CD4-positive, alpha-beta memory T cell (primary cell): ENCODE measurements at regions of chr2 and their contacts with region 1.

Region 1: GRCh38 chr2:197804049-197804757 is at the start of gene PLCL1:
- DNase-seq: peak; percentile 89 to 92 (median 90)
- H3K4me3 ChIP-seq: peak within 1 kb of the TSS; percentile 60 to 82
- H3K4me3 Mint-ChIP-seq: peak within 1 kb of the TSS; percentile 92 to 97 (median 96)
- H3K27ac ChIP-seq: peak within 1 kb of the TSS; percentile 61
- H3K27ac Mint-ChIP-seq: peak within 1 kb of the TSS; percentile 77 to 94 (median 89)
- H3K4me1 ChIP-seq: peaks cover 50% of the 10 kb centered on the region
- H3K4me1 Mint-ChIP-seq: peaks cover 35 to 54% (median 45%) of the 10 kb centered on the region in 4 donors
- H3K27me3 ChIP-seq: no peaks in the 10 kb centered on the region
- H3K27me3 Mint-ChIP-seq: peaks cover 0 to 1% of the 10 kb centered on the region in 2 donors
- total RNA-seq, gene PLCL1: 16.9 to 17.6 TPM

Region 2: GRCh38 chr2:197851451-197851850 is 47.2 kb after region 1 on chr2:
- CTCF ChIA-PET with region 1: interaction called, 9 read pairs
- POLR2A ChIA-PET with region 1: interaction called, 3 read pairs
- intact Hi-C with region 1: loop called (anchors 2 kb)
- DNase-seq: no peak
- H3K4me3 ChIP-seq: no peak overlapping the region
- H3K4me3 Mint-ChIP-seq: peak overlapping the region in 1 of 8 donors; percentile 1
- H3K27ac ChIP-seq: no peak overlapping the region
- H3K27ac Mint-ChIP-seq: no peak overlapping the region
- H3K4me1 ChIP-seq: peaks cover 44% of the 10 kb centered on the region
- H3K4me1 Mint-ChIP-seq: peaks cover 45 to 70% (median 56%) of the 10 kb centered on the region in 4 donors
- H3K27me3 ChIP-seq: no peaks in the 10 kb centered on the region
- H3K27me3 Mint-ChIP-seq: no peaks in the 10 kb centered on the region

Region 3: GRCh38 chr2:197889041-197889440 is 84.8 kb after region 1 on chr2:
- CTCF ChIA-PET with region 1: interaction called, 3 read pairs
- POLR2A ChIA-PET with region 1: interaction called, 3 read pairs
- intact Hi-C with region 1: loop called (anchors 2 kb)
- DNase-seq: peak; percentile 22 to 61 (median 28)
- H3K4me3 ChIP-seq: no peak overlapping the region
- H3K4me3 Mint-ChIP-seq: peak overlapping the region in 7 of 8 donors; percentile 10 to 75 (median 69)
- H3K27ac ChIP-seq: no peak overlapping the region
- H3K27ac Mint-ChIP-seq: peak overlapping the region; percentile 48 to 93 (median 81)
- H3K4me1 ChIP-seq: peaks cover 59% of the 10 kb centered on the region
- H3K4me1 Mint-ChIP-seq: peaks cover 29 to 57% (median 40%) of the 10 kb centered on the region in 4 donors
- H3K27me3 ChIP-seq: no peaks in the 10 kb centered on the region
- H3K27me3 Mint-ChIP-seq: no peaks in the 10 kb centered on the region

Region 4: DNA sequence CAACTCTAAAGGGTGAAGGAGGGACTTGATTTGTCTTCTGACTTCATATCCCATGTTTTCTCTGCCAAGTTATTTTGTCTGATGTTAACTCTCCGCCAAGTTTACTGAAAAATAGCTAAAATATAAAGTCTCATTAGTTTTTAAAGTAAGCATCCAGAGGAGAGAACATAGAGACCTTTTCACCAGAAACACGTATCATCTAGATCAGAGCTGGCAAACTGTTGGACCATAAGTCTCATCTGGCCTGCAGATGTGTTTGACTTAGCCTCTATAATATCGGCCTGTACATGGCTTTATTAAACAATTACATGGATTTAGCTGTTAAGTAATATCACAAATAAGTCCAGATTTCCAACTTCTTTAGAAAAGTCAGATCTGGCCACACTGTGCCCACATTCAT is 182.8 kb after region 1 on chr2:
- CTCF ChIA-PET with region 1: interaction called, 3 read pairs
- POLR2A ChIA-PET with region 1: no interaction called
- intact Hi-C with region 1: loop called (anchors 1 kb)
- DNase-seq: no peak
- H3K4me3 ChIP-seq: no peak overlapping the region
- H3K4me3 Mint-ChIP-seq: no peak overlapping the region
- H3K27ac ChIP-seq: no peak overlapping the region
- H3K27ac Mint-ChIP-seq: peak overlapping the region in 1 of 7 donors; percentile 8
- H3K4me1 ChIP-seq: no peaks in the 10 kb centered on the region
- H3K4me1 Mint-ChIP-seq: peaks cover 0 to 8% (median under 1%) of the 10 kb centered on the region in 4 donors
- H3K27me3 ChIP-seq: no peaks in the 10 kb centered on the region
- H3K27me3 Mint-ChIP-seq: no peaks in the 10 kb centered on the region

Region 5: GRCh38 chr2:198127627-198128026 is 323.4 kb after region 1 on chr2:
- CTCF ChIA-PET with region 1: interaction called, 29 read pairs
- POLR2A ChIA-PET with region 1: interaction called, 3 read pairs
- intact Hi-C with region 1: loop called (anchors 1 kb)
- DNase-seq: peak in 4 of 5 donors; percentile 37 to 49 (median 42)
- H3K4me3 ChIP-seq: no peak overlapping the region
- H3K4me3 Mint-ChIP-seq: no peak overlapping the region
- H3K27ac ChIP-seq: no peak overlapping the region
- H3K27ac Mint-ChIP-seq: no peak overlapping the region
- H3K4me1 ChIP-seq: no peaks in the 10 kb centered on the region
- H3K4me1 Mint-ChIP-seq: peaks cover 0 to 1% (median under 1%) of the 10 kb centered on the region in 4 donors
- H3K27me3 ChIP-seq: no peaks in the 10 kb centered on the region
- H3K27me3 Mint-ChIP-seq: peaks cover 0 to 1% of the 10 kb centered on the region in 2 donors

Region 6: DNA sequence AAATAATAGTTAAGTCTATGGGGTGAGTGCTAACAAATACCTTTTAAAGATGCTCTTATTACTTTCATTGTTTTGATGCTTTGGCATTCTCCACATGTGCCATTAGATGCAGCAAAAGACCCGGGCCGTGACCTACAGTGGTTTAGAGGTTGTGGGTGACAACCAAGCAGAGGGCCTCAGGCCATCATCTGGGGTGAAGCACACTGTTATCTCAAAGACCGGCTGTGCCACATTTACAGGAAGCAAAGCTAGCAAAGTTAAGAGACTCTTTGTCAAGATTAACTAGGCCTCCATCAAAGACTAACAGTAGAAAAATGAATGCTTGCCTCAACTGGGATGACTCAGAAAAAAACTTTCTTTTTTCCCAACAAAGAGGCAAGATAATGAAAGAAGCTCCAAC is 958.2 kb after region 1 on chr2:
- CTCF ChIA-PET with region 1: no interaction called
- POLR2A ChIA-PET with region 1: no interaction called
- intact Hi-C with region 1: no loop called
- DNase-seq: no peak
- H3K4me3 ChIP-seq: no peak overlapping the region
- H3K4me3 Mint-ChIP-seq: no peak overlapping the region
- H3K27ac ChIP-seq: no peak overlapping the region
- H3K27ac Mint-ChIP-seq: no peak overlapping the region
- H3K4me1 ChIP-seq: no peaks in the 10 kb centered on the region
- H3K4me1 Mint-ChIP-seq: no peaks in the 10 kb centered on the region
- H3K27me3 ChIP-seq: no peaks in the 10 kb centered on the region
- H3K27me3 Mint-ChIP-seq: no peaks in the 10 kb centered on the region